ENCODE measurements at regions of chr14 and their contacts with region 1.

Region 1: GRCh38 chr14:85380881-85381280 is 149.1 kb upstream of the FLRT2 start:
- DNase-seq: no peak
- H3K4me3 Mint-ChIP-seq: no peak overlapping the region
- H3K27ac Mint-ChIP-seq: no peak overlapping the region
- H3K4me1 Mint-ChIP-seq: no peaks in the 10 kb centered on the region
- H3K27me3 Mint-ChIP-seq: no peaks in the 10 kb centered on the region

Region 2: GRCh38 chr14:83646862-83647261 is 1734.0 kb before region 1 on chr14:
- CTCF ChIA-PET with region 1: no interaction called
- intact Hi-C with region 1: loop called (anchors 5 kb)
- DNase-seq: no peak
- H3K4me3 Mint-ChIP-seq: no peak overlapping the region
- H3K27ac Mint-ChIP-seq: no peak overlapping the region
- H3K4me1 Mint-ChIP-seq: no peaks in the 10 kb centered on the region
- H3K27me3 Mint-ChIP-seq: no peaks in the 10 kb centered on the region

Region 3: GRCh38 chr14:85319998-85320630 is 60.8 kb before region 1 on chr14:
- CTCF ChIA-PET with region 1: no interaction called
- intact Hi-C with region 1: no loop called
- DNase-seq: no peak
- H3K4me3 Mint-ChIP-seq: no peak overlapping the region
- H3K27ac Mint-ChIP-seq: no peak overlapping the region
- H3K4me1 Mint-ChIP-seq: no peaks in the 10 kb centered on the region
- H3K27me3 Mint-ChIP-seq: no peaks in the 10 kb centered on the region

Region 4: DNA sequence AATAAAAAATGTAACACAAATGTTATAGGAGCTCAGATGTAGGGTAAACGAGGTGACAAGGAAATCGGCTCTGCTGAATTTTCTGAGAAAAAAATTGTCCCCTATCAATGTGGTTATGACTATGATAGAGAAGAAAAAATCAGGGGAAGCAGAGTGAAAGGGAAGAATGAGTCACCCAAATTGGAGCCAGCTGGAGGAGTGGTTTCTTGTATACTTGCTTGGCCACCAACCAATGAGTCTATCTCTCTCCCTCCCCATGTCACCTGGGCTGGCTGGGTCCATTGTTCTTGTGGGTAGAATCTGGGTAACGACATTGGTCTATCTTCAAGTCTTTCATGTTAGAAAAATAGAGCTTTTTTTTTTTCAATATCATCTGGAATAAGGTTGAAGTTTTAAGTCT is 47.6 kb before region 1 on chr14:
- CTCF ChIA-PET with region 1: no interaction called
- intact Hi-C with region 1: no loop called
- DNase-seq: no peak
- H3K4me3 Mint-ChIP-seq: no peak overlapping the region
- H3K27ac Mint-ChIP-seq: no peak overlapping the region
- H3K4me1 Mint-ChIP-seq: no peaks in the 10 kb centered on the region
- H3K27me3 Mint-ChIP-seq: no peaks in the 10 kb centered on the region

Measured in activated naive CD4-positive, alpha-beta T cell treated with anti-CD3 and anti-CD28 coated beads for 36 hours (primary cell).